ENCODE measurements at regions of chr1 and their contacts with region 1.

Region 1: GRCh38 chr1:166910396-166910994 is 34.4 kb upstream of the TADA1 start:
- DNase-seq: peak; percentile 89
- ATAC-seq: peak; percentile 90
- H3K4me3 Mint-ChIP-seq: no peak overlapping the region
- H3K27ac Mint-ChIP-seq: no peak overlapping the region
- H3K4me1 Mint-ChIP-seq: peaks cover 45% of the 10 kb centered on the region
- H3K27me3 Mint-ChIP-seq: peaks cover 12% of the 10 kb centered on the region

Region 2: GRCh38 chr1:166627558-166627957 is 282.9 kb before region 1 on chr1:
- CTCF ChIA-PET with region 1: no interaction called
- DNase-seq: no peak
- ATAC-seq: no peak
- H3K4me3 Mint-ChIP-seq: no peak overlapping the region
- H3K27ac Mint-ChIP-seq: no peak overlapping the region
- H3K4me1 Mint-ChIP-seq: no peaks in the 10 kb centered on the region
- H3K27me3 Mint-ChIP-seq: peaks cover 2% of the 10 kb centered on the region

Region 3: GRCh38 chr1:166875734-166876539 is 34.6 kb before region 1 on chr1 and contains the start of gene TADA1:
- CTCF ChIA-PET with region 1: interaction called, 14 read pairs
- DNase-seq: peak; percentile 99
- ATAC-seq: peak; percentile 93
- H3K4me3 Mint-ChIP-seq: peak within 1 kb of the TSS; percentile 82
- H3K27ac Mint-ChIP-seq: peak within 1 kb of the TSS; percentile 98
- H3K4me1 Mint-ChIP-seq: peaks cover 49% of the 10 kb centered on the region
- H3K27me3 Mint-ChIP-seq: peaks cover 7% of the 10 kb centered on the region
- total RNA-seq, gene TADA1: 18.1 to 18.8 TPM

Region 4: GRCh38 chr1:166884040-166884642 is 26.4 kb before region 1 on chr1:
- CTCF ChIA-PET with region 1: interaction called, 52 read pairs
- DNase-seq: peak; percentile 64
- ATAC-seq: peak; percentile 85
- H3K4me3 Mint-ChIP-seq: peak overlapping the region; percentile 35
- H3K27ac Mint-ChIP-seq: no peak overlapping the region
- H3K4me1 Mint-ChIP-seq: peaks cover 20% of the 10 kb centered on the region
- H3K27me3 Mint-ChIP-seq: peaks cover 40% of the 10 kb centered on the region

Region 5: DNA sequence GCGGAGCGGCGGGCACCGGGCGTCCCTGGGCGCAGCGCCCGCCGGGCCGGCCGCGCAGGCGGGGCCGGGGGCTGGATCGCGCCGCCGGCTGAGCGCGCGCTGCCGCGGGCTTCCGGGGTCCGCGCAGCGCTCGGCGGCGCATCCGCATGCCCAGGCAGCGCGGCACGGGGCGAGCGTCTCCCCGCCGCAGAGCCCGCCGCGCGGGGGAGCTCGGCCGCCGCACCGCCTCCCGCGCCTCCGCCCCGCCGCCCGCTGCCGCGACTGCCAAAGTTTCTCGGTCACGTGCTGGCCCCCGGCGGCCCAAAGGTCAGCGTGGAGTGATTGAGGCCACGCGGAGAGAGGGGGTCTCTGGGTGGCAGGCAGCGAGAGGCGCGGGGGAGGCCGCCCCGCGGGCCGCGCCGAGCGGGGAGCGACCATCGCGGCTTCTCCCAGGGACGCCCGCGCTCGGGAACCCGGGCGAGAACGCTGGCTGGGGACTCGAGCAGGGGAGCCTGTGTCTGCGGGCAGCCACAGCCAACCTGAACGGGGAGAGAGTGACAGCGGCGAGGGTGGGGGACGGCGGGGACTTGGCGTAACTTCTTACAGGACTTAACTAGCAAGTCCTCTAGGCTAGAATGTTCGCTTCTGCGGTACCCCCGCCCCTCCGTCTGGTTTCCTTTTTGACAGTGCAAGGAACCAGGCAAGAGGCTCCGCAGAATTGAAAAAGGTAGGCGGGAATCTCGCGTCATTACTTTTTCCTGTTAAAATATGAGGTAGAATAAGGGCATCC is 65.0 kb after region 1 on chr1 and contains the start of gene ILDR2:
- CTCF ChIA-PET with region 1: interaction called, 17 read pairs
- DNase-seq: peak; percentile 78
- ATAC-seq: peak; percentile 94
- H3K4me3 Mint-ChIP-seq: peak within 1 kb of the TSS; percentile 81
- H3K27ac Mint-ChIP-seq: peak within 1 kb of the TSS; percentile 21
- H3K4me1 Mint-ChIP-seq: peaks cover 39% of the 10 kb centered on the region
- H3K27me3 Mint-ChIP-seq: peaks cover 43% of the 10 kb centered on the region
- total RNA-seq, gene ILDR2: 7.4 to 7.9 TPM

Region 6: GRCh38 chr1:167043752-167044488 is 133.4 kb after region 1 on chr1:
- CTCF ChIA-PET with region 1: interaction called, 25 read pairs
- DNase-seq: peak; percentile 90
- ATAC-seq: peak; percentile 100
- H3K4me3 Mint-ChIP-seq: peak overlapping the region; percentile 74
- H3K27ac Mint-ChIP-seq: peak overlapping the region; percentile 67
- H3K4me1 Mint-ChIP-seq: peaks cover 13% of the 10 kb centered on the region
- H3K27me3 Mint-ChIP-seq: peaks cover 56% of the 10 kb centered on the region

Region 7: GRCh38 chr1:167066333-167067122 is 156.0 kb after region 1 on chr1:
- CTCF ChIA-PET with region 1: interaction called, 690 read pairs
- DNase-seq: peak; percentile 82
- ATAC-seq: peak; percentile 94
- H3K4me3 Mint-ChIP-seq: no peak overlapping the region
- H3K27ac Mint-ChIP-seq: no peak overlapping the region
- H3K4me1 Mint-ChIP-seq: peaks cover 4% of the 10 kb centered on the region
- H3K27me3 Mint-ChIP-seq: no peaks in the 10 kb centered on the region

Region 8: DNA sequence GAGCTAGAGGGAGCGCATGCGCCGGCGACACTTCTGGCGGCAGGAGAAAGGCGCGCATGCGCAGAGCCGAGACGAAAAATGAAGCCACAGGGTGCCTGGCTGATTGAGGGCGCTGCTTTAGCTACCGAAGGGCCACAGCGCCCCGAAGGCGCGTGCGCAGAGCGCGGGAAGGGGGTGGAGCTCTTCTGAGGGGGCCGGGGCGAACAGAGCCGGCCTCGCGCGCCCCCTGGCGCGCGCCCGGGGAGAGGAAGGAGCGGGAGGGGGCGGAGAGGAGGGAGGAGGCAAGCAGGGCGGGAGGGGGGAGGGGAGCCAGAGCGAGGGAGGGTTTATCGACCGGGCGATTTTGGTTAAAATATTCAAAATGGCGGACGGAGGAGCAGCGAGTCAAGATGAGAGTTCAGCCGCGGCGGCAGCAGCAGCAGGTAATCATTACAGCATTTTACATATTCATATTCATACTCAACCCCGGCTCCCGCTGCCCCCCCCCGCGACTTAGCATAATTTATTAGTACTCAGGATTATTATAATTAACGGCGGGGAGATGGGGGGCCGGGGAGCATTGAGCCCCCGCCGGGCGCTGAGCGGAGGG is 310.1 kb after region 1 on chr1 and contains the start of gene POU2F1:
- CTCF ChIA-PET with region 1: interaction called, 11 read pairs
- DNase-seq: peak; percentile 99
- ATAC-seq: peak; percentile 86
- H3K4me3 Mint-ChIP-seq: peak within 1 kb of the TSS; percentile 86
- H3K27ac Mint-ChIP-seq: peak within 1 kb of the TSS; percentile 94
- H3K4me1 Mint-ChIP-seq: peaks cover 38% of the 10 kb centered on the region
- H3K27me3 Mint-ChIP-seq: no peaks in the 10 kb centered on the region
- total RNA-seq, gene POU2F1: 20.7 to 24.6 TPM